ENCODE measurements at regions of chr10 and their contacts with region 1.

Region 1: DNA sequence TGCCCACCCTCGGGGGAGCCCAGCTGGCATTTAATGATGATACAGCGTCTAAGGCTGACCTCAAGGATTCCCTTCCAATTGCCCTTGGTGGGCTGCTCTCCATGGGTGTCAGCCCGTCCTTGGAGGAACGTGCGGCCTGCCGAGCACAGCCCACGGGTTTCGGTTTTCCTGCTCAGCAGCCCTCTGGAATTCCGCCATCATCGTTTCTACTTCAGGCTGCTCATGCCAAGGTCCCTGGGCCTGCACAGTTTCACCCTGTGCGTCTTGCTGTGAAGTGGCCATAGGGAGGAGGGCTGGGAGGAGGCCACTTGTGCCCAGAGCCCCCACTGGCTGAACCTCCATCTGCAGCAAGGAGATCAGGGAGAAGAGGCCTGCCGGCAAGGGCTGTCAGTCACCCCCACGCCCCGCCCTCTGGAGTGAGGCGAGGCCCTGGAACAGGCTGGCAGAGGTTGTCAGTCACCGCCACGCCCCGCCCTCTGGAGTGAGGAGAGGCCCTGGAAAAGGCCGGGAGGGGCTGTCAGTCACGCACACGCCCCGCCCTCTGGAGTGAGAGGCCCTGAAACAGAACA is 82.8 kb downstream of the CHST15 start:
- DNase-seq: peak in 2 of 3 donors; percentile 57 to 73
- ATAC-seq: peak; percentile 43 to 66
- H3K4me3 ChIP-seq: no peak overlapping the region
- H3K27ac ChIP-seq: no peak overlapping the region
- H3K4me1 ChIP-seq: no peaks in the 10 kb centered on the region
- H3K27me3 ChIP-seq: no peaks in the 10 kb centered on the region

Region 2: GRCh38 chr10:123687764-123688163 is 322.9 kb before region 1 on chr10:
- intact Hi-C with region 1: no loop called
- DNase-seq: no peak
- ATAC-seq: no peak
- H3K4me3 ChIP-seq: no peak overlapping the region
- H3K27ac ChIP-seq: no peak overlapping the region
- H3K4me1 ChIP-seq: no peaks in the 10 kb centered on the region
- H3K27me3 ChIP-seq: no peaks in the 10 kb centered on the region

Region 3: GRCh38 chr10:124259139-124259825 is 248.6 kb after region 1 on chr10:
- intact Hi-C with region 1: loop called in 1 of 4 experiments (anchors 10 kb)
- DNase-seq: no peak
- ATAC-seq: no peak
- H3K4me3 ChIP-seq: no peak overlapping the region
- H3K27ac ChIP-seq: no peak overlapping the region
- H3K4me1 ChIP-seq: no peaks in the 10 kb centered on the region
- H3K27me3 ChIP-seq: no peaks in the 10 kb centered on the region

Region 4: DNA sequence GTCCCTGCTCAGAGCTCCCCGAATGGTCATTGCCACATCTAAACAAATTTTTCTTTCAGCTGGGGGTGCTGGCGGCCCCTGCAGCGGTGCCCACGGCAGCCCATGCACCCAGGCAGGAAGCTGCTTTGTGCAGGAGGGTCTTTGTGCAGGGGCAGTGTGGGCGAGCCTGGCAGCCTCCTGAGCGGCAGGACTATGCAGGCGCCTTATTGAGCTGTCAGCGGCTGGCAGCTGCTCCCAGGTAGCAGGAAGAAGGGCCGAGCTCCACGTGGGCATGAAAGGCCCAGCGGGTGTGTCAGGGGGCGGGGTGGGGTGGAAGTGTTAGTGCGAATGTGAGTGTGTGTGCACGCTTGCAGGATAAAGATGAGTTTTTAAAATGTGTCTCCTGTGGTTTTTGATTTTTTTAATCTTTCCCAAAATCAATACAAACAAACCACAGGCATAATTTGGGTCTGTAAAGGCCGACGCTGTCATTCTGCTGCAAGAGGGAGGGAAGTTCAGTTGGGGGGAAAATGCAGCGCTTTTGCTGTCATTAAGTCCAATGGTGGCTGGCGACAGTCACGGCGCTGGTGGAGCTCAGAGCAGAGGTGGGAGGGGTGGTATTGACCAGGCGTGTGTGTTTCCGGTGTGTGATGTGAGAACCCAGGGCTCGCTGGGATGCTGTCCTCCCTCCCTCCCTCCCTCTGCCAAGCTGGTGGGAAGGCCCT is 534.9 kb after region 1 on chr10:
- intact Hi-C with region 1: no loop called
- DNase-seq: peak in 1 of 3 donors; percentile 36
- ATAC-seq: no peak
- H3K4me3 ChIP-seq: no peak overlapping the region
- H3K27ac ChIP-seq: no peak overlapping the region
- H3K4me1 ChIP-seq: no peaks in the 10 kb centered on the region
- H3K27me3 ChIP-seq: no peaks in the 10 kb centered on the region

Measured in right cardiac atrium (tissue), 5 donors.